HEK293 (cell line): ENCODE measurements at regions of chr4 and their contacts with region 1.

Region 1: GRCh38 chr4:109406338-109406931 is 27.2 kb upstream of the SEC24B start:
- H3K4me3 ChIP-seq: no peak overlapping the region
- H3K27ac ChIP-seq: no peak overlapping the region
- H3K4me1 ChIP-seq: no peaks in the 10 kb centered on the region
- CTCF ChIP-seq: peak; percentile 57

Region 2: DNA sequence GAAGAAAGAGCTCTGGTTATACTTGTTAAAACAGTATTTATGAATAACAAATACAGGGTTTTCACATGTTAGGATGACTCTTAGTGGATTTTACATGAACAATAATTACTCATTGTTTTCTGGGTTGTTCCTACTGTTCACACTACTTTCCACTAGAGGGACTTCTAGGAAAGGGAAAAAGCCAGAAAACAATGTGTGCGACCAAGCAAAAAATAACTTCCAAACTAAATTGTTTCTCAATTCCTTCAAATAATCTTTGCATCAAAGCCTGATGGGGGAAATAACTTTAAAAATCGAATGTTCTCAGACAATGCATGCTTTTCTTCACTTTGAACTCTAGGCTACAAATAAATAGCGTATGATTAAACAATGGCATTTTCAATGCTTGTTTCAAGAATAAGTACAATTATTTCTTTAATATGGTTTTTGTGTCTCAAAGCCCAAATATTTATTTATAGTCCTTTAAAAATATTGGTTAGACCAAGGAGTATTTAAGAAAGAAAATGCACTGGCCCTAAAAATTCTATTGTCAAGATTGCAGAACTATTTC is 571.5 kb before region 1 on chr4:
- CTCF ChIA-PET with region 1: interaction called, 14 read pairs
- POLR2A ChIA-PET with region 1: no interaction called
- H3K4me3 ChIP-seq: no peak overlapping the region
- H3K27ac ChIP-seq: no peak overlapping the region
- H3K4me1 ChIP-seq: peaks cover 2% of the 10 kb centered on the region; the same call in 1 of the 2 replicates
- CTCF ChIP-seq: no peak

Region 3: DNA sequence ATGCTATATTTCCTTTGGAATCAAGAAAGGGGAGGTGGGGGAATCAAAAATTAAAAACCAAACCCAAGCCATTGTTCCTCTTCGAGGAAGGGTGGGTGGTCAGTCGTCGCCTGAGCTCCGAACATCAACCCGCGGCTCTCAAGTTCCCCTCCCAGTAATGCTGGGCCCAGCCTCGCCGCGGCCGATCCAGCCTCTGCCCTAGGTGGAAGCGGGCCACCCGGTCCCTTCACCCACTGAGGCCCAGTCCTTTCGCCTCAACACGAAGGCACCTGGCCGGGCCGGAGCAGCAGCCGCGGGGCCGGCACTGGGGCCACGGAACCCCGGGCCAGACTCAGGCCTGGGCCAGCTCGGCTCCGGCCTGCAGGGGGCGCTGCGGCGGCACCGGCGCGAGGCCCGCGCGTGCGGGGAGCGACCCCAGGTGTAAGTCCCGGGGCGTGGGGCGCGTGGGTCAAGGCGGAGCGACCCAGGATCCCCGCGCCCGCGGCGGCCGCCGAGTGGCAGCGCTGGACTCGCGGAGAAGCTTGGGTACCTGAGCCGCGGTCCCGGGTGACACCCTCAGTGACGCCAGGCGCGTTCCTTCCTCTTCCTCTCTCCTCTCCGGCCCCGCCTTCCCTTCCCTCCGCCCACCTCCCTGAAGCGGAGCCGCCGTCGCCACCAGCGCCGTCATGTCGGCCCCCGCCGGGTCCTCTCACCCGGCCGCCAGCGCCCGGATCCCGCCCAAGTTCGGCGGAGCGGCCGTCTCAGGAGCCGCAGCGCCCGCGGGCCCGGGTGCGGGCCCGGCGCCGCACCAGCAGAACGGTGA is 27.0 kb after region 1 on chr4 and contains the start of gene SEC24B:
- CTCF ChIA-PET with region 1: no interaction called
- POLR2A ChIA-PET with region 1: no interaction called
- H3K4me3 ChIP-seq: peak within 1 kb of the TSS; percentile 78
- H3K27ac ChIP-seq: peak within 1 kb of the TSS; percentile 89
- H3K4me1 ChIP-seq: peaks cover 5% of the 10 kb centered on the region; the same call in 1 of the 2 replicates
- CTCF ChIP-seq: 0 out of 2 replicates have a peak, but pooled peaks have one; percentile 25